Activated T-helper 2 cell treated with anti-CD3 and anti-CD28 coated beads, Interferon-gamma antibody, Interleukin-2, Interleukin-4, amounts not matched to agents 10 μg/mL and 5 μg/mL and 100 μg/mL, durations not matched to agents 14 hours and 24 hours and 36 hours (primary cell): ENCODE measurements at regions of chr12 and their contacts with region 1.

Region 1: DNA sequence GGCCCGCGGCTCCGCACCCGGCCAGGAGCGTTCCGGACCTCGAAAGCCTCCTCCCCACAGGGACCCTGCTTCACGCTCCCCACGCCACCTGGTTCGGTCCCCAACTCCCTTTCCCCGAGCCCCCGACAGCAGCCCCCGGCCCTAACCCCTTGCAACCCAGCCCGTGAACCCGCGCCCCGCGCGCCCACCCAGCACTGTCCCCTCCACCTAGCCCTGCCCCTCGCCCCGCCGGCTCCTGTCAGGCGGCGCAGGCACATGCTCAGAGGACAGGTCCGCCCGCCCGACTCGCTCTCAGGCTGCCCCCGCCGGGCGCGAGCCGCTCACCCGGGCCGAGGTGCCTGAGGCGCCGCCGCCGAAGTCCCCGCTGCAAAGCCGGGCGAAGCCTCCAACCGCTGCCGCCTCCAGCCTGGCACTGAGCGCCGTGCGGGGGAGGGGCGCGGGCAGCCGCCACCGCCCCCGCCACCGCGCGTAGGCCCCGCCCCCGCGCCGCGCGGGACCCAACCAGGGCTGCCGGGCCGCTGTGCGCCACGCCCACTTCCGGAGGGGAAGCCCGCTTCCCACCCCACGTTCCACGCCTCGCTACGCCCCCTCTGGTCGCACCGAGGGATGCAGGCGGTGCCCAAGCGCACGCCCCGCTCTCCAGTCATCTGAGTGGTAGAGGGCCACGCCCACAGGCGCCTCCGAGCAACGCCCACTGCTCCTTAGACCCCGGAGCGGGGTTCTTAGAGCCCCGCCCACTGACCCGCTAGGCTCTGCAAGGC is at the start of gene CORO1C:
- DNase-seq: peak; percentile 96
- H3K4me3 Mint-ChIP-seq: peak within 1 kb of the TSS; percentile 87
- H3K27ac Mint-ChIP-seq: peak within 1 kb of the TSS; percentile 87
- H3K4me1 Mint-ChIP-seq: peaks cover 42% of the 10 kb centered on the region
- H3K27me3 Mint-ChIP-seq: peaks cover 4% of the 10 kb centered on the region
- total RNA-seq, gene CORO1C: 81.5 and 88.8 TPM in 2 replicates

Region 2: DNA sequence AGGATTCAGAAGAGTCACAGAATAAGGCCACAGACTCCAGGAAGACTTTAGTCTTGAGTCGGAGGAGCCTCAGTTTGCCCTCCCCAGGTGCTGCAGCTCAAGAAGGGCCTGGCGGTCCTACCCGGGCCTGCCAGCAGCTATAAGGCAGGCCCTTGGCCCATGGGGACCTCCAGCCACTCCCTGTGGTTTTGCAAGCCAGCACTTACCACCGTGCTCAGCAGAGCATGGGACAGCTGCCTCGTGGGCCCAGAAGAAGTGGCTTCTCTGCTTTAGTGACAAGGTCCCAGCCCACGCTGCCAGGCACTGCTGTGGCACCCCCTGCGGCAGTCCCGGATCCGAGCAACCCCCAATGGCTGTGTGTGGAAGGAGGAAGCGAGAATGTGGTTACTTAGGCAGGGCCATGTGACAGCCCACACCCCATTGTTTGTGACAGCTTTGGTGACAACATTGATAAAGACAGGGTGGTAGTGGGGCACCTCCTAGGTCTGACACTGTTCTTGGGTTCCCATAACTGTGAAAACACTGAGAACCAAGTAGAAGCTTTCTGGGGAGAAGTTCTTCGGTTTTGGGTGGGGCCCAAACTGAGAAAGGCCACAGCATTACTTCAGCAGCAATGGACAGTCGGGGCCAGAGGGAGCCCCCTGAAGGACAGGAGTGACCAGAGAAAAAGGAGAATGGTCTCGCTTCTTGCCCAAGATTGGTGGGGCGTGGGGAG is 97.6 kb before region 1 on chr12 and contains the start of gene SELPLG:
- intact Hi-C with region 1: loop called (anchors 5 kb)
- DNase-seq: peak; percentile 83
- H3K4me3 Mint-ChIP-seq: peak within 1 kb of the TSS; percentile 98
- H3K27ac Mint-ChIP-seq: peak within 1 kb of the TSS; percentile 99
- H3K4me1 Mint-ChIP-seq: peaks cover 65% of the 10 kb centered on the region
- H3K27me3 Mint-ChIP-seq: no peaks in the 10 kb centered on the region
- total RNA-seq, gene SELPLG: 52.1 and 55.6 TPM in 2 replicates

Region 3: DNA sequence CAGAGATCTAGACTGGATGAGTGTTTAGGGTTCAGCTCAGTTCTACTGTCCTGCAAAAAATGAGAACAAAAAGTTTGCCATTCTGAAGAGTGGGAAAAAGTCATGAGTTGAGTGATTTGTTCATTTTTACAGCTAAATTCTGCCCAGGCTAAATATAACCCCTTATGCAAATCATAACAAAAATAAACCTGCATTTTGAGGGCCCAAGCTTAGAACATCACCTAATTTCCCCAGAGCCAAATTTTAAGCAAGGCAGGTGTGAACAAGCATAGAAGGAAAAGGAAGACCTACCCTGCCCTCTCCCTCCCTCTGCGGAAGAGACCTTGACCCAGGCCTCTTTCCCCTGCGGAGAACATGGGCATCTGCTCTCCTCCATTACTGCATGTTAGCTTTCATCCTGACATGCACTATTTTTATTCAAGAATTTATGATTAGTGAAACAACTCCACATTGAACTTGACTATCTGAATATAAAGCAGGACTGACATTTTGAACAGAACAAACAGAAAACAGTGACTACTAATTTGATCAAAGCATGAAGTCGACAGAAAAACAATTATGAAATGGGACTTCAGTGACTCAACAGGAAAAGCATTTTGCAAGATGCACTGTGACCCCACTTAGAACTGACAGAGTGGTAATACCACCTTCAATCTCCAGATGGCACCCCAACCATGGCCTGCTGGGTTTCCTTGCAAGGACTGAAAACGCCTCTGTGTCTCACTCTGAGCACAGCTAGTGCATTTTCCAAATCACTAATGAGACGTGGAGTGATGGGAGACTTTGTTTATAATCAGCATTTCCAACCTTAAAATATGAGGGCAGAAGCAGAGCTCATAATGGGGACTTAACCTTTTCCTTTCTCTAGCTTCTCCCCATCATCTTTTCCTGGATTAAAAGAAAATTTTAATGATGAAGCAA is 66.7 kb before region 1 on chr12:
- intact Hi-C with region 1: loop called (anchors 2 kb)
- DNase-seq: peak; percentile 75
- H3K4me3 Mint-ChIP-seq: no peak overlapping the region
- H3K27ac Mint-ChIP-seq: peak overlapping the region; percentile 85
- H3K4me1 Mint-ChIP-seq: peaks cover 24% of the 10 kb centered on the region
- H3K27me3 Mint-ChIP-seq: no peaks in the 10 kb centered on the region

Region 4: DNA sequence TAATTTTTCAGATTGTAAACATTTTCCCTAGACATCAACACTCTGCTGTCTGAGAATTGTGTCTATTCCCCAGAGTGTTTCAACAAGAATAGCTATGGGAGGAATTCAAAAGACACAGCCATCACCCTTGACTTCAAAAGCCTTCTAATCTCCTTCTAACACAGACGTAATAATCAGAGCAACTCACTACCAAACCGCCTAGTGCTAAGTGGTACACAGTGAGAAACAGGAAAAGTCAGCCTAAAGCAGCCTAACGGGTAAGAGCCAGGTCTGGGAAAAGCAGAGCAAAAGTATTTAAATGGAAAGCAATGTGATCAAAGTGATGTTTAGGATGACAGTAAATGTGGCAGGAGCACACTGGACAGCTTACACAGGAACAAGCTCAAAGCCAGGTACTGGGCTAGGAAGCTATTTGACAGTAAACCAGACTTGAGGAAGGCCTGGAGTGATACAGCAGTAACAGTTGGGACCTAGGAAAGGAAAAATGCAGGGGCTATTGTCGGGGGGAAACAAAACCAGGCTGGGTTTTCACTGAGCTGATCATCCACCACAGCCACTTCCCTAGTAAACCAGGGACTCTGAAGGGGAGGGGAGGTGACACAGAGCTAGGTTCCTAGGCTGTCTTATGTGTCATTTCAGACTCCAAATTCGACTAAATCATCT is 29.4 kb before region 1 on chr12:
- intact Hi-C with region 1: no loop called
- DNase-seq: no peak
- H3K4me3 Mint-ChIP-seq: no peak overlapping the region
- H3K27ac Mint-ChIP-seq: peak overlapping the region; percentile 73
- H3K4me1 Mint-ChIP-seq: peaks cover 25% of the 10 kb centered on the region
- H3K27me3 Mint-ChIP-seq: no peaks in the 10 kb centered on the region

Region 5: GRCh38 chr12:108752387-108752786 is 21.1 kb after region 1 on chr12:
- intact Hi-C with region 1: no loop called
- DNase-seq: no peak
- H3K4me3 Mint-ChIP-seq: no peak overlapping the region
- H3K27ac Mint-ChIP-seq: no peak overlapping the region
- H3K4me1 Mint-ChIP-seq: no peaks in the 10 kb centered on the region
- H3K27me3 Mint-ChIP-seq: no peaks in the 10 kb centered on the region

Region 6: GRCh38 chr12:108803428-108804105 is 72.3 kb after region 1 on chr12:
- intact Hi-C with region 1: loop called (anchors 5 kb)
- DNase-seq: peak; percentile 50
- H3K4me3 Mint-ChIP-seq: no peak overlapping the region
- H3K27ac Mint-ChIP-seq: peak overlapping the region; percentile 60
- H3K4me1 Mint-ChIP-seq: peaks cover 9% of the 10 kb centered on the region
- H3K27me3 Mint-ChIP-seq: no peaks in the 10 kb centered on the region

Region 7: GRCh38 chr12:109052414-109053323 is 321.4 kb after region 1 on chr12 and contains the start of gene USP30:
- intact Hi-C with region 1: loop called (anchors 2 kb)
- DNase-seq: peak; percentile 80
- H3K4me3 Mint-ChIP-seq: peak within 1 kb of the TSS; percentile 96
- H3K27ac Mint-ChIP-seq: peak within 1 kb of the TSS; percentile 98
- H3K4me1 Mint-ChIP-seq: peaks cover 11% of the 10 kb centered on the region
- H3K27me3 Mint-ChIP-seq: no peaks in the 10 kb centered on the region
- total RNA-seq, gene USP30: 6.8 and 7.3 TPM in 2 replicates